ENCODE measurements at regions of chr18 and their contacts with region 1.

Region 1: GRCh38 chr18:9516437-9517064 is 41.2 kb downstream of the RALBP1 start:
- DNase-seq: peak; percentile 61
- ATAC-seq: peak; percentile 58
- H3K4me3 ChIP-seq: no peak overlapping the region
- H3K4me3 Mint-ChIP-seq: no peak overlapping the region
- H3K27ac ChIP-seq: no peak overlapping the region
- H3K27ac Mint-ChIP-seq: no peak overlapping the region
- H3K4me1 ChIP-seq: no peaks in the 10 kb centered on the region
- H3K4me1 Mint-ChIP-seq: no peaks in the 10 kb centered on the region
- H3K27me3 ChIP-seq: no peaks in the 10 kb centered on the region
- H3K27me3 Mint-ChIP-seq: no peaks in the 10 kb centered on the region
- CTCF ChIP-seq: peak; percentile 98

Region 2: DNA sequence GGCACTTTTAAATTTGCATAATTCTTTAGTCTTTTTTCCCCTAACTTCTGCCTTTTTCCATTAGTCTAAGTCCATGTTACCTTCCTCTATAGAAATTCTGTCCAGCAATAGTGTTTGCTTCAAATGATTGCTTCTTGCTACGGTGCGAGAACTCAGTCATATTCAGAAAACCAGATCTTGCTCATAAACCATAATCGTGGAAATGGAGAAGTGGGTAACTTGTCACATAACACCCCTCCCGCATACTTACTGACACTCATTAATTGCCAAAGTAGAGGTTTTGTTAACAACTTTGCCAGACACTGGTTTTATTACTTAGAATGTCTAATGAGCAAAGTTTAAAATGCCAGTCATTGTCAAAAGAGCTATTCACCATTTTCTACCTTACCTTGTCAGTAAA is 276.3 kb before region 1 on chr18:
- CTCF ChIA-PET with region 1: no interaction called
- POLR2A ChIA-PET with region 1: no interaction called
- intact Hi-C with region 1: no loop called
- DNase-seq: no peak
- ATAC-seq: no peak
- H3K4me3 ChIP-seq: no peak overlapping the region
- H3K4me3 Mint-ChIP-seq: no peak overlapping the region
- H3K27ac ChIP-seq: no peak overlapping the region
- H3K27ac Mint-ChIP-seq: no peak overlapping the region
- H3K4me1 ChIP-seq: no peaks in the 10 kb centered on the region
- H3K4me1 Mint-ChIP-seq: peaks cover 5% of the 10 kb centered on the region
- H3K27me3 ChIP-seq: no peaks in the 10 kb centered on the region
- H3K27me3 Mint-ChIP-seq: no peaks in the 10 kb centered on the region
- CTCF ChIP-seq: no peak

Region 3: GRCh38 chr18:9506046-9506792 is 10.3 kb before region 1 on chr18:
- CTCF ChIA-PET with region 1: interaction called, 23 read pairs
- POLR2A ChIA-PET with region 1: no interaction called
- intact Hi-C with region 1: no loop called
- DNase-seq: no peak
- ATAC-seq: no peak
- H3K4me3 ChIP-seq: no peak overlapping the region
- H3K4me3 Mint-ChIP-seq: no peak overlapping the region
- H3K27ac ChIP-seq: no peak overlapping the region
- H3K27ac Mint-ChIP-seq: no peak overlapping the region
- H3K4me1 ChIP-seq: no peaks in the 10 kb centered on the region
- H3K4me1 Mint-ChIP-seq: peaks cover 34% of the 10 kb centered on the region
- H3K27me3 ChIP-seq: no peaks in the 10 kb centered on the region
- H3K27me3 Mint-ChIP-seq: no peaks in the 10 kb centered on the region
- CTCF ChIP-seq: no peak

Measured in B cell (primary cell).